Lower leg skin (tissue), 4 donors: ENCODE measurements at regions of chr16 and their contacts with region 1.

Region 1: GRCh38 chr16:10181196-10182162 is 749 bp downstream of the GRIN2A start:
- DNase-seq: peak; percentile 20 to 88
- H3K4me3 ChIP-seq: no peak overlapping the region
- CTCF ChIP-seq: peak in 1 of 3 donors; percentile 40
- POLR2A ChIP-seq: no peak

Region 2: GRCh38 chr16:9647981-9648712 is 533.3 kb before region 1 on chr16:
- intact Hi-C with region 1: loop called (anchors 10 kb)
- DNase-seq: no peak
- H3K4me3 ChIP-seq: no peak overlapping the region
- CTCF ChIP-seq: no peak
- POLR2A ChIP-seq: no peak